Colonic mucosa (tissue), 4 donors: ENCODE measurements at regions of chr6 and their contacts with region 1.

Region 1: DNA sequence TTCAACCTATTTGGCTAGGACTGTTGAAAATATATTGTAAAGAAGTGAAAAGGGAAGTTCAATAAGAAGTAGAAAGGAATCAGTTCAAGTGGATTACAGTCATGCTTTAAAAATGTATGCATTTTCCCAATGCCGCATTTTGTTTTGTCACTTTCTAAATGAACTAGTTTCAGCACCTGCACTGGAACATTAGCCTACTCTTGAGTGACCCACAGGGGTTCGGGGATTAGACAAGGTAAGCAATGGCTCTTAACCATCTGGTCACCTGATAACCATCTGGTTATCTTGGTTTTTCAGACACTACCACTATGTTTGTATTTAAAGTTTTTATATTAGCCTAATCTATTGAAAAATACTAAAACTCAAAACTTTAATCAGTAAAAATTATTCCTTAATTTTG is 97.6 kb downstream of the CD164 start:
- DNase-seq: no peak
- H3K4me3 ChIP-seq: no peak overlapping the region
- H3K27ac ChIP-seq: no peak overlapping the region
- H3K4me1 ChIP-seq: no peaks in the 10 kb centered on the region
- H3K27me3 ChIP-seq: no peaks in the 10 kb centered on the region
- CTCF ChIP-seq: no peak

Region 2: DNA sequence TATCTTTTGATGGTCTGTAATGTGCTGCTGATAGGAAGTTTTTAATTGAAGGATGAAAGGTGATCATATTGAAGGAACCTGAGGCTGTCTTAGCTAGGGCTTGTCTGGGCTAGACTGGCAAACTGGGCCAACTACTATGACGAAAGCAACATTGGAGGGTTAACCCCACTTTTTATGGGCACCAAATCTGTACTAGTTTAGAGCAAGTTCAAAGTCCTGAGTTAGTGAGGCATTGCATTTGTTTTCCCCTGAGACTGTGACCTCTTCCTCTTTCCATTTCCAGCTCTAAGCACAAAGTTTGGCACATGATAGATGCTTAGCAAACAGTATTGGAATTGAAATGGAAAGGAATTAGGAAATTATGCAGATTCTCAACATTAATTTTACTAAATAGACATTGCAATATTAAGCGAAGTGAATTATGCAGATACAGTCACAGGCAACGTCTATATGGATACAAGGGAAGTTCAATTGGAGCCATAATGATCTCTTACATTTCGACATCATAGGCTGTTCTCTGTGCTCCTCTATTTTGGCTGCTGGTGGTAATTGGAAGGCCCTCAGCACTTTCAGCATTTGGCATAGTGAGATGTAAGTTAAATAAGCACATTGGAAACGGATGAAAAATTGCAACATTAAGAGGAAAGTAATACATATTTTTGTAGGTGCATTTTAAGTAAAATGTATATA is 167.2 kb before region 1 on chr6:
- intact Hi-C with region 1: no loop called
- DNase-seq: peak; percentile 52
- H3K4me3 ChIP-seq: no peak overlapping the region
- H3K27ac ChIP-seq: no peak overlapping the region
- H3K4me1 ChIP-seq: no peaks in the 10 kb centered on the region
- H3K27me3 ChIP-seq: no peaks in the 10 kb centered on the region
- CTCF ChIP-seq: no peak

Region 3: GRCh38 chr6:109743739-109744138 is 459.1 kb after region 1 on chr6:
- intact Hi-C with region 1: loop called (anchors 5 kb)
- DNase-seq: no peak
- H3K4me3 ChIP-seq: no peak overlapping the region
- H3K27ac ChIP-seq: no peak overlapping the region
- H3K4me1 ChIP-seq: no peaks in the 10 kb centered on the region
- H3K27me3 ChIP-seq: no peaks in the 10 kb centered on the region
- CTCF ChIP-seq: no peak